Heart right ventricle (tissue), 16 donors: ENCODE measurements at regions of chr1 and their contacts with region 1.

Region 1: GRCh38 chr1:112395821-112396652 is at the start of gene CTTNBP2NL:
- DNase-seq: peak; percentile 96 to 98
- ATAC-seq: peak; percentile 93 to 97 (median 95)
- H3K4me3 ChIP-seq: peak within 1 kb of the TSS; percentile 88 to 100 (median 94)
- H3K27ac ChIP-seq: peak within 1 kb of the TSS; percentile 88 to 97 (median 94)
- H3K4me1 ChIP-seq: peaks cover 0 to 91% (median 71%) of the 10 kb centered on the region in 9 donors
- H3K27me3 ChIP-seq: no peaks in the 10 kb centered on the region
- CTCF ChIP-seq: no peak
- total RNA-seq, gene CTTNBP2NL: 12.1 to 20.6 (median 17.5) TPM

Region 2: GRCh38 chr1:112431038-112431437 is 35.0 kb after region 1 on chr1:
- intact Hi-C with region 1: loop called in 3 of 10 experiments (anchors 5 kb)
- DNase-seq: no peak
- ATAC-seq: peak in 5 of 8 donors; percentile 37 to 55 (median 48)
- H3K4me3 ChIP-seq: no peak overlapping the region
- H3K27ac ChIP-seq: peak overlapping the region in 9 of 10 donors; percentile 33 to 76 (median 52)
- H3K4me1 ChIP-seq: peaks cover 0 to 51% (median 23%) of the 10 kb centered on the region in 9 donors
- H3K27me3 ChIP-seq: no peaks in the 10 kb centered on the region
- CTCF ChIP-seq: no peak

Region 3: GRCh38 chr1:112439592-112439991 is 43.6 kb after region 1 on chr1:
- intact Hi-C with region 1: loop called in 3 of 10 experiments (anchors 5 kb)
- DNase-seq: no peak
- ATAC-seq: peak in 6 of 8 donors; percentile 52 to 74 (median 67)
- H3K4me3 ChIP-seq: no peak overlapping the region
- H3K27ac ChIP-seq: peak overlapping the region; percentile 13 to 81 (median 60)
- H3K4me1 ChIP-seq: peaks cover 0 to 81% (median 39%) of the 10 kb centered on the region in 9 donors
- H3K27me3 ChIP-seq: no peaks in the 10 kb centered on the region
- CTCF ChIP-seq: no peak

Region 4: GRCh38 chr1:112466078-112466660 is 70.1 kb after region 1 on chr1:
- intact Hi-C with region 1: loop called in 8 of 10 experiments (anchors 1 to 2 kb)
- DNase-seq: peak; percentile 94 to 97
- ATAC-seq: peak; percentile 93 to 98 (median 94)
- H3K4me3 ChIP-seq: peak overlapping the region in 9 of 10 donors; percentile 12 to 59 (median 49)
- H3K27ac ChIP-seq: peak overlapping the region; percentile 4 to 84 (median 74)
- H3K4me1 ChIP-seq: peaks cover 3 to 33% (median 18%) of the 10 kb centered on the region in 9 donors
- H3K27me3 ChIP-seq: no peaks in the 10 kb centered on the region
- CTCF ChIP-seq: peak; percentile 77 to 97 (median 90)